Heart right ventricle (tissue), 16 donors: ENCODE measurements at regions of chr3 and their contacts with region 1.

Region 1: GRCh38 chr3:32467333-32468070 is 35.1 kb downstream of the CMTM6 start:
- DNase-seq: peak; percentile 53 to 80
- ATAC-seq: peak; percentile 88 to 96 (median 90)
- H3K4me3 ChIP-seq: peak overlapping the region in 9 of 10 donors; percentile 14 to 53 (median 46)
- H3K27ac ChIP-seq: peak overlapping the region in 3 of 10 donors; percentile 46 to 79 (median 58)
- H3K4me1 ChIP-seq: peaks cover 0 to 55% (median 18%) of the 10 kb centered on the region in 9 donors
- H3K27me3 ChIP-seq: no peaks in the 10 kb centered on the region
- CTCF ChIP-seq: peak; percentile 95 to 100 (median 99)

Region 2: GRCh38 chr3:32283304-32283703 is 184.2 kb before region 1 on chr3:
- intact Hi-C with region 1: loop called in 1 of 10 experiments (anchors 10 kb)
- DNase-seq: peak; percentile 54 to 82
- ATAC-seq: peak; percentile 77 to 91 (median 83)
- H3K4me3 ChIP-seq: no peak overlapping the region
- H3K27ac ChIP-seq: peak overlapping the region in 6 of 10 donors; percentile 2 to 71 (median 56)
- H3K4me1 ChIP-seq: peaks cover 0 to 54% (median 21%) of the 10 kb centered on the region in 9 donors
- H3K27me3 ChIP-seq: no peaks in the 10 kb centered on the region
- CTCF ChIP-seq: no peak

Region 3: DNA sequence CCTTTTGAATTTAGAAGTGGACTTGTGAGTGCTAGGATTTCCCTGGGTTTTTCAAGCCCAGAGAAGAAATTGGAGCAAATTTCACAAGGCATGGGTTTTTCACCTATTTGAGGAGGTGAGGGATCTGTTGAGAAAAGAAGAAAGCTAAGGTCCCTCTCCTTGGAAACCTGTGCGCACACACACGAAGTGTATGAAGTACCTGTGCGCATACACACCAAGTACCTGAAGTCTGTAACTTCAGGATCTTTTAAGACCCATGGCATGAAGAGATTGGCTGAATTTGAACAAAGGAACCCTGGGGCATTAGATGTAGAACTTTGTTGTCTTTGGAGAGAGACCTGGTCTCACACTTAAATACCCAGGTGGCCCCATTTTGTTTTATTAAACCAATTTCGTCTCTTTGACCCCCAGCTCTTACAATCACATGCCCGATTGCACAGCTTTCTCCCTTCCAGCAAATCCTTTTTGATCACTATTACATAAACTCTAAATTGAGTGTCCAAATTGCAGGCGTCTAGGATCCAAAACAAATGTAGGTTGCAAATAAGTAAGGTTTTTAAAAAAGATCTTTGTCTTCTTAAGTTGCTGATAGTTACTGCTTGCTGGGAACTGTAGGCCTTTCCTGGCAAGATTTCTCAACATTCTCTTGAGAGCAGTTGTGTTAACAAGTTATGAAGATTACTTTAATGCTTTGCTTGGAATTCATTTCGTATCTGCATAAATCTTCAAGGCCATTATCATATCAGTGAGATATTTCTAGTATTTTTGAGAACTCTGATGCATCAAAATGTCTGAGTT is 164.7 kb before region 1 on chr3:
- intact Hi-C with region 1: loop called in 7 of 10 experiments (anchors 2 to 10 kb)
- DNase-seq: no peak
- ATAC-seq: peak in 2 of 8 donors; percentile 32 to 52
- H3K4me3 ChIP-seq: no peak overlapping the region
- H3K27ac ChIP-seq: peak overlapping the region in 6 of 10 donors; percentile 10 to 64 (median 32)
- H3K4me1 ChIP-seq: peaks cover 0 to 45% (median 10%) of the 10 kb centered on the region in 9 donors
- H3K27me3 ChIP-seq: no peaks in the 10 kb centered on the region
- CTCF ChIP-seq: no peak

Region 4: GRCh38 chr3:32391643-32392535 is 75.6 kb before region 1 on chr3 and contains the start of gene CMTM7:
- intact Hi-C with region 1: loop called in 2 of 10 experiments (anchors 5 kb)
- DNase-seq: peak; percentile 73 to 76
- ATAC-seq: peak; percentile 81 to 95 (median 90)
- H3K4me3 ChIP-seq: peak within 1 kb of the TSS; percentile 58 to 95 (median 76)
- H3K27ac ChIP-seq: peak within 1 kb of the TSS; percentile 31 to 96 (median 86)
- H3K4me1 ChIP-seq: peaks cover 0 to 40% (median 12%) of the 10 kb centered on the region in 9 donors
- H3K27me3 ChIP-seq: no peaks in the 10 kb centered on the region
- CTCF ChIP-seq: peak in 3 of 9 donors; percentile 10 to 23 (median 11)
- total RNA-seq, gene CMTM7: 1.7 to 9.2 (median 2.8) TPM

Region 5: GRCh38 chr3:32428092-32429068 is 39.1 kb before region 1 on chr3:
- intact Hi-C with region 1: loop called in 1 of 10 experiments (anchors 5 kb)
- DNase-seq: no peak
- ATAC-seq: no peak
- H3K4me3 ChIP-seq: no peak overlapping the region
- H3K27ac ChIP-seq: peak overlapping the region in 1 of 10 donors; percentile 78
- H3K4me1 ChIP-seq: peaks cover 0 to 78% (median 0%) of the 10 kb centered on the region in 9 donors
- H3K27me3 ChIP-seq: no peaks in the 10 kb centered on the region
- CTCF ChIP-seq: no peak

Region 6: GRCh38 chr3:32522682-32523081 is 55.2 kb after region 1 on chr3:
- intact Hi-C with region 1: no loop called
- DNase-seq: no peak
- ATAC-seq: peak in 4 of 8 donors; percentile 16 to 59 (median 37)
- H3K4me3 ChIP-seq: no peak overlapping the region
- H3K27ac ChIP-seq: peak overlapping the region in 3 of 10 donors; percentile 3 to 44 (median 14)
- H3K4me1 ChIP-seq: no peaks in the 10 kb centered on the region
- H3K27me3 ChIP-seq: no peaks in the 10 kb centered on the region
- CTCF ChIP-seq: no peak